Ascending aorta (tissue), 2 donors: ENCODE measurements at regions of chr13 and their contacts with region 1.

Region 1: DNA sequence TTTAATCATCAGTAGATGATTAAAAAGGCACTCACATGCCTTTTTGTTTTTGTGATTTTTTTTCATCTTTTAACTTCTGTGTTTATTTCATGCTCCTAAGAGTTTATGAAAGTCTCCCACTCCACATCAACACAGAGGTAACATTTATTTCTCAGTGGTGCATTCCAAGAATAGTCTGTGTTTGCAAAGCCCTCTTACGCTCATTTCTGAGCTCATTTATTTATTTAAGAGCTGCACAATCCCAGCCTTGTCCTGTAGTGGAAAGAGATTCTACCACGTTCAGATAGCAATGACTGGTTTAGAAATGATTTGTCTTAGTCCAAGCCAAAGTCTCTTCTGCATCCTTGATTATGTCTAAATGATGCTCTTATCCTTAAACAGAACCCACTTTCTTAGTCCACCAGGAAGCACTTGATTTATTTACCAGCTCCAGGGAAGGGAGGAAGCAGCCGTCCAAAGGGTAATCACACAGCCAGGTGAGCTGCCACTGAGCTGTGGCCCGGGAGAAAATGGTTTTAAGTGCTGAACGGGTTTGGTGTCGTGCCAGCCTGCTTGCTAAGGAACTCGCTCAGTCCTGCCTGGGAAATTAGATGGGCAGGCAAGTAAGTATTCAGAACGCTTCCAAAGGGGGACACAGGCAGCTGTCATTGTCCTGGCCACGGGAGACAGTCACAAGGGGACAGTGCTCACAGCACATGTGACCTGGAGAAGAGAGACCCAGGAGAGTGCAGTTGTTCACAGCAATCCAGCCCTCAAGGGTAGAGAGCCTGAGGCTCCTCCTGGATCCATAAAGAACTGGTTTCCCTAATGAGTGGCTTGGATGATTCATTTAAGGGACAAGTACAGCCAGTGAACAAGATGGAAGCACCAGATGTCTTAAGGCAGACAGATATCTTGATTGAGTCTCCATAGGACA is 131.8 kb upstream of the WASF3 start:
- DNase-seq: no peak
- H3K4me3 ChIP-seq: no peak overlapping the region
- H3K27ac ChIP-seq: peak overlapping the region; percentile 47 to 86
- H3K4me1 ChIP-seq: peaks cover 0 to 11% of the 10 kb centered on the region in 2 donors
- H3K27me3 ChIP-seq: no peaks in the 10 kb centered on the region
- CTCF ChIP-seq: no peak

Region 2: DNA sequence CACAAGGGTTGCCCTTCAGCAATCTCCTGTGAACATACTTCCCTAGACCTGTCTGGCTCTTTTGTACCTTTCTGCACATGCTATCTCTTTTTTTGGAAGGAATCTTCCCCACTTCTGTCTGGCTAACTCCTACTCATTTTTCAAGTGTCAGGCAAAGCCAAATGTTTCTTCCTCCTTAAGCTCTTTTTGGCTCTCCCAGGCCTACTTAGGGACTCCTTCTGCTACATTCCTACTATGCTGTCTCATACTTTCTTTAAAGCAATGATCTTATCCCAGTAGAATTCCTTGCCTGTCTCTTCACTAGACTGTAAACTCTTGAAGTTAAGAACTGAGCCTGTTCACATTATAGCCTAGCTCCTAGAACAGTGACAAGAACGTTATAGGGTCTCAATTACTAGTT is 16.8 kb after region 1 on chr13:
- intact Hi-C with region 1: loop called (anchors 2 kb)
- DNase-seq: no peak
- H3K4me3 ChIP-seq: no peak overlapping the region
- H3K27ac ChIP-seq: peak overlapping the region; percentile 17 to 36
- H3K4me1 ChIP-seq: no peaks in the 10 kb centered on the region
- H3K27me3 ChIP-seq: no peaks in the 10 kb centered on the region
- CTCF ChIP-seq: no peak

Region 3: DNA sequence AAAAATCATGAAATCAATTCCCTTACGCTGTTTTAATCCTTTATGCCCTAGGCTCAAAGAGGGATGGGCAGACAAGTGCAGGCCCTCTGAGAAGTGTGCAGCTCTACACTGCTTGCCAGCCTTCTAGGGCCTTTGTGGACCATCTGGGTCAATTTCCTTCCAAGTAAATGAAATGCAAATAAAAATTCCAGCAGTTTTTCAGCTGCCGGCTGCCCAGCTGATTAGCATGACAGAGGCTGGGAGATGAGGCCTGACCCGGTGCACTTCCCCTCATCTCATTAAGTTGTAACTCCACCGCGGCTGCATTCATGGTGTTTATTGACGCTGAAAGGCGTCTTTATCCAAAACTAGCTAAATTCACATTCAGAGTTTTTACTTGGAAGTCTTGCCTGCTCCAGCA is 1319.1 kb after region 1 on chr13:
- intact Hi-C with region 1: no loop called
- DNase-seq: no peak
- H3K4me3 ChIP-seq: no peak overlapping the region
- H3K27ac ChIP-seq: no peak overlapping the region
- H3K4me1 ChIP-seq: no peaks in the 10 kb centered on the region
- H3K27me3 ChIP-seq: no peaks in the 10 kb centered on the region
- CTCF ChIP-seq: no peak